Activated T-helper 1 cell treated with anti-CD3 and anti-CD28 coated beads, Interleukin-12 subunit alpha, Interleukin-12 subunit beta, Interleukin-2, Interleukin-4 antibody, amounts not matched to agents 30 ng/mL and 10 ng/mL and 1 ng/mL, durations not matched to agents 14 hours and 24 hours and 36 hours (primary cell): ENCODE measurements at regions of chr1 and their contacts with region 1.

Region 1: GRCh38 chr1:112881742-112882127 is 74.3 kb downstream of the SLC16A1 start:
- DNase-seq: no peak
- H3K4me3 Mint-ChIP-seq: no peak overlapping the region
- H3K27ac Mint-ChIP-seq: no peak overlapping the region
- H3K4me1 Mint-ChIP-seq: no peaks in the 10 kb centered on the region
- H3K27me3 Mint-ChIP-seq: peaks cover 18% of the 10 kb centered on the region

Region 2: DNA sequence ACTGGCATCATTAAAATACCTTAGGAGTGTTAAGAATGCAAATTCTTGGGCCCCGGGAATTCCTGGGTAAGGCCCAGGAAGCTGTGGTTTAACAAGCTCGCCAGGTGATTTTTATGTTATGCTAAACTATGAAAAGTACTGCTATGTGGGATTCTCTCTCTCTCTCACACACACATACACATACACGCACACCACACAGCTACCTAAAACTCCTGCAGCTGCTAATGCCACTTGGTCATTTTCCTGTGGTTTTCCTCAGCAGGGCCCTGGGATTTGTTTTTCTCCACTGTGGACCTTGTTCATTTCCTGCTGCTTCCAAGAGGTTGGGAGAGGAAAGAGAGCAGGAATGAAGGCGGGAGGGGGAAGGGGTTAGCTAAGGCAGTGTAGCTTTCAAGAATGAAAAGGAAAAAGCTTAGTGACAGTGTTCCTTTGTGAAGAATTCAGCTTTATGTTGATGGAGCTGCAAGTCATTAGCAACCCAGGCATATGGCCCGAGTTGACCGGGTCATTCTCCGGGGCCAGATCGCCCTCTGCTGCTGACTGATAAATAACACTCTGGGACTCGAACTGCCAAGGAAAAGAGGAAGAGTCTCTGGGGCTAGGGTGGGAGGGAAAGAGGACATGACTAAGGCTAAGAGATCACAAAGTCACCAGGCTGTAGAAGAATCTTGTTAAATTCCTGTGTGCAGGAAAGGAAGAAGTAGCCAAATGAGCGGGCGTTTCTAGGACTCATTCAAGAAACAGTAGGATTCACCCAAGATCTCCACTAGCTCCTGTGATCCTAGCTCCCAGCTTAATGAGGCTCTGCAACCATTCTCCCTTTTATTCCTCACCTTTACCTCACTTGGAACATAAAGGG is 160.8 kb after region 1 on chr1:
- intact Hi-C with region 1: loop called (anchors 2 kb)
- DNase-seq: no peak
- H3K4me3 Mint-ChIP-seq: peak overlapping the region; percentile 24
- H3K27ac Mint-ChIP-seq: no peak overlapping the region
- H3K4me1 Mint-ChIP-seq: peaks cover 38% of the 10 kb centered on the region
- H3K27me3 Mint-ChIP-seq: no peaks in the 10 kb centered on the region

Region 3: DNA sequence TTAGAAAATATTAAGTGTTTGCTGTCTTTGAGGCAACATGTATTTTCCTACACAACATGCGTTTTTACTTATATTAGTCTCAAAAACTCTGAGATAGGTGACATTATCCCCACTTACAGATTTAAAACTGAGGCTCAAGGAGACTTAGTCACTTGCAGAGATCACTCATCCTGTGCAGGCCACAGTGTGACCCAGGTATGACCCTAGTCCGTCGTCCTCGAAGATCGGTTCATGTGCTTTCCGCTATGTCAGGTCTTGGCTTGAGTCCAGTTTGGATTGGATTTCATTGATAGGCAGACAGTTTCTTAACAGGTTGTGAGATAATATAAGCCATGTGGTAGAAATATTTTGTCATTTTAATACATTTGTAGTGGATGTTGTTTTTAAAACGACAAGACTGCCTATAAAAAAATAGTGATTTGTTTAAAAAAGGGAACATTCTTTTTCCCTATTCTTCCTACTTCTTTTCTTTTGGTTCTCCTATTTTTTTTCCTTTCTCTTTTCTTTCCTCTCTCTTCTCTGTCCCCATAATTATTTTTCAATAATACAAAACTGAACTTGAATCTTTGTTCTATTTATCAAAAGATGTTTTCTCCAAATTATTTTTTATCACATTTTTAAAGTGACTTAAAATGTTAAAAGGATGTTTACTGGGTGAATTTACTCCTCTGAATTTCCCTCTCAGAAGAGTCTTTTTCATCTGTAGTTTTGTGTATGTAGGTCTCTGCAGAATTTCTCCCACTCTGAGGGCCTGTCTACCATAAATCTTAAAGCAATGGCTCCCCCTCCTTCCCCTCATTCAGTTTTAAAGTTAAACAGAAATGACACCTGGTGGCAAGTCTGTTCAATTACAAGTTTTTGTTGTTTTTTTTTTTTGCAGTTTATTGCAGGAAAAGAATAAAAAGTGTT is 795.8 kb after region 1 on chr1:
- intact Hi-C with region 1: loop called (anchors 1 kb)
- DNase-seq: no peak
- H3K4me3 Mint-ChIP-seq: no peak overlapping the region
- H3K27ac Mint-ChIP-seq: no peak overlapping the region
- H3K4me1 Mint-ChIP-seq: peaks cover 6% of the 10 kb centered on the region
- H3K27me3 Mint-ChIP-seq: no peaks in the 10 kb centered on the region